ENCODE measurements at regions of chr3 and their contacts with region 1.

Region 1: GRCh38 chr3:161851941-161852566 is 355.4 kb downstream of the OTOL1 start:
- DNase-seq: peak; percentile 87
- H3K4me3 Mint-ChIP-seq: no peak overlapping the region
- H3K27ac Mint-ChIP-seq: no peak overlapping the region
- H3K4me1 Mint-ChIP-seq: peaks cover 21% of the 10 kb centered on the region
- H3K27me3 Mint-ChIP-seq: no peaks in the 10 kb centered on the region
- CTCF ChIP-seq: peak; percentile 100

Region 2: DNA sequence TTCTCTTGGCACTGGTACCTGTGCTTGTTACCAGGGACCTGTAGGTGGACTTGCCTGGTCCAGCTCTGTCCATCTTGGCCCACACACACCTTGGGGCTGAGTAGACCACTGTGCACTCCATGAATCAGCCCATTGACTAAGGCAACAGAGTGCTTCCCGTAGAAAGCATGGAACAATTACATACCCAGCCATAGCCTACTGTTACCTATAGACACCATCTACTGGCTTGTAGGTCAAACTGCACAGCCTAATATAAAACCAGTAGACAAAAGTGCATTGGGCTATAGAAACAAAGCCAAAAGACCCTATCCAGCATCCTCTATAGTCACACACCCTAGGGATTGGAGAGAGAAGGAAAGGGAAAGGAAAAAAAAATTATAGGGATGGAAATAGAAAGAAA is 23.5 kb after region 1 on chr3:
- CTCF ChIA-PET with region 1: no interaction called
- intact Hi-C with region 1: no loop called
- DNase-seq: no peak
- H3K4me3 Mint-ChIP-seq: no peak overlapping the region
- H3K27ac Mint-ChIP-seq: no peak overlapping the region
- H3K4me1 Mint-ChIP-seq: no peaks in the 10 kb centered on the region
- H3K27me3 Mint-ChIP-seq: no peaks in the 10 kb centered on the region
- CTCF ChIP-seq: no peak

Region 3: GRCh38 chr3:161914737-161915417 is 62.8 kb after region 1 on chr3:
- CTCF ChIA-PET with region 1: interaction called, 6 read pairs
- intact Hi-C with region 1: loop called (anchors 5 kb)
- DNase-seq: peak; percentile 43
- H3K4me3 Mint-ChIP-seq: no peak overlapping the region
- H3K27ac Mint-ChIP-seq: no peak overlapping the region
- H3K4me1 Mint-ChIP-seq: peaks cover 22% of the 10 kb centered on the region
- H3K27me3 Mint-ChIP-seq: no peaks in the 10 kb centered on the region
- CTCF ChIP-seq: no peak

Region 4: DNA sequence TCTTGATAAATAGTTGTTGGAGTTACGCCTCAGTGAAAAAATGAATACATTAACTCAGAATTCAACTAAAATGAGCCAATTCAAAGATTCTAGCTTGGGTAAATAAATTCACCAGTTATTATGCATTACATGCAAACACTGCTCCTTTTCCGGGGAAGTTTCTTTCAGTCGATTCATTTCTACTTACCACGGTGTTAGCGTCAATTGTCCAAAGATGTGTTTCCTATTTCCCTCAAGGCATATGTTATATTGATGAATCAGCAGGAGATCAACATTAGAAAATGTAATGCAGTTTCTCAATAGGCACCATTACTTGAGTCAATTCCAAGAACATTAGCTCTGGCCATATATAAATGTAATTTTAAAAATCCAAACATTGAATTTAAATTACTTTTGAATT is 162.2 kb after region 1 on chr3:
- CTCF ChIA-PET with region 1: no interaction called
- intact Hi-C with region 1: loop called (anchors 5 kb)
- DNase-seq: no peak
- H3K4me3 Mint-ChIP-seq: no peak overlapping the region
- H3K27ac Mint-ChIP-seq: no peak overlapping the region
- H3K4me1 Mint-ChIP-seq: no peaks in the 10 kb centered on the region
- H3K27me3 Mint-ChIP-seq: no peaks in the 10 kb centered on the region
- CTCF ChIP-seq: no peak

Region 5: GRCh38 chr3:162041622-162042021 is 189.6 kb after region 1 on chr3:
- CTCF ChIA-PET with region 1: interaction called, 3 read pairs
- intact Hi-C with region 1: loop called (anchors 1 kb)
- DNase-seq: peak; percentile 13
- H3K4me3 Mint-ChIP-seq: no peak overlapping the region
- H3K27ac Mint-ChIP-seq: no peak overlapping the region
- H3K4me1 Mint-ChIP-seq: no peaks in the 10 kb centered on the region
- H3K27me3 Mint-ChIP-seq: no peaks in the 10 kb centered on the region
- CTCF ChIP-seq: no peak

Region 6: DNA sequence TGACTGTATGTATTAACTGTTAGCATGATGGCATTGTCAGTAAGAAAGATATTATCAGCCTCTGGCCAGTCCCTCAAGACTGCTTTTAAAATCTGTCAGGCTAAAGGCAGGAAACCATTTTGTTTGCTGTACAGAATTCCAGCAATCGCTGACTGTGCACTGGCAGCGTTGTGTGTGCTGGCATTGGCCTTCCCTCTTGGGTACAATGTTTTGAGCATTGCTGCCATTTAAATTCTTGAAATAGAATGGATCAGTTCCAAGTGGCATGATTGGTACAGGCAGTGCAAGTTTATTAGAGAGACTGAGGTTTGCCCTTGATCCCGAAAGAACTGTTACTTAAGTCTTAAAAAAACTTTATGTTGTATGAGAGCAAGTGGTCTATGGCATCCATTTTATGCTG is 433.2 kb after region 1 on chr3:
- CTCF ChIA-PET with region 1: no interaction called
- intact Hi-C with region 1: loop called (anchors 5 kb)
- DNase-seq: no peak
- H3K4me3 Mint-ChIP-seq: no peak overlapping the region
- H3K27ac Mint-ChIP-seq: no peak overlapping the region
- H3K4me1 Mint-ChIP-seq: peaks cover 13% of the 10 kb centered on the region
- H3K27me3 Mint-ChIP-seq: no peaks in the 10 kb centered on the region
- CTCF ChIP-seq: no peak

Region 7: GRCh38 chr3:162489853-162490252 is 637.8 kb after region 1 on chr3:
- CTCF ChIA-PET with region 1: no interaction called
- intact Hi-C with region 1: loop called (anchors 5 kb)
- DNase-seq: peak; percentile 22
- H3K4me3 Mint-ChIP-seq: no peak overlapping the region
- H3K27ac Mint-ChIP-seq: no peak overlapping the region
- H3K4me1 Mint-ChIP-seq: no peaks in the 10 kb centered on the region
- H3K27me3 Mint-ChIP-seq: no peaks in the 10 kb centered on the region
- CTCF ChIP-seq: peak; percentile 63

Region 8: GRCh38 chr3:163043074-163043473 is 1191.0 kb after region 1 on chr3:
- CTCF ChIA-PET with region 1: no interaction called
- intact Hi-C with region 1: loop called (anchors 5 kb)
- DNase-seq: peak; percentile 23
- H3K4me3 Mint-ChIP-seq: no peak overlapping the region
- H3K27ac Mint-ChIP-seq: no peak overlapping the region
- H3K4me1 Mint-ChIP-seq: no peaks in the 10 kb centered on the region
- H3K27me3 Mint-ChIP-seq: no peaks in the 10 kb centered on the region
- CTCF ChIP-seq: peak; percentile 60

Measured in Calu3 (cell line).